ENCODE measurements at regions of chr12 and their contacts with region 1.

Region 1: DNA sequence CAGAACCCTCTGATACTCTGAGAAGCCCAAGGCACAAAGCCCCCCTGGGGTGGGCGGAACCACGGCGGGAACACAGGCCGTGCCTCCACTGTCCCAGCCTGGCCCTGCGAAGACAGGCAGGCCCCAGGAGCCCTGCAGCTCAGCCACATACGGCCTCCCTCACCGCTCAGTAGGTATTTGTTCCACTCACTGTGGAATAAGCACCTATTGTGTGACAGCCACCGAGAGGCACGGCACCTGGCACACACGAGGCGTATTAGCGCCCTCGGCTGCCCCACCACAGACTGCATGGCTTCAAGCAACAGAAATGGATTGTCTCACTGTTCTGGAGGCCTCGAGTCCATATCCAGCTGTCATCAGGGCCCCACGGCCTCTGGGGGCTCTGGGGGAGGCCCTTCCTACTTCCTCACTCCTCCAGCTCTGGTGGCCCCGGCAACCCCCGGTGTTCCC is 66.3 kb downstream of the NCOR2 start:
- DNase-seq: peak in 1 of 2 experiments; percentile 61
- H3K4me3 ChIP-seq: no peak overlapping the region
- H3K27ac ChIP-seq: peak overlapping the region; percentile 73
- H3K4me1 ChIP-seq: peaks cover 7 to 67% (median 46%) of the 10 kb centered on the region in 4 experiments
- H3K27me3 ChIP-seq: no peaks in the 10 kb centered on the region
- CTCF ChIP-seq: no peak
- EP300 ChIP-seq: no peak
- POLR2A ChIP-seq: no peak
- RAD21 ChIP-seq: no peak

Region 2: DNA sequence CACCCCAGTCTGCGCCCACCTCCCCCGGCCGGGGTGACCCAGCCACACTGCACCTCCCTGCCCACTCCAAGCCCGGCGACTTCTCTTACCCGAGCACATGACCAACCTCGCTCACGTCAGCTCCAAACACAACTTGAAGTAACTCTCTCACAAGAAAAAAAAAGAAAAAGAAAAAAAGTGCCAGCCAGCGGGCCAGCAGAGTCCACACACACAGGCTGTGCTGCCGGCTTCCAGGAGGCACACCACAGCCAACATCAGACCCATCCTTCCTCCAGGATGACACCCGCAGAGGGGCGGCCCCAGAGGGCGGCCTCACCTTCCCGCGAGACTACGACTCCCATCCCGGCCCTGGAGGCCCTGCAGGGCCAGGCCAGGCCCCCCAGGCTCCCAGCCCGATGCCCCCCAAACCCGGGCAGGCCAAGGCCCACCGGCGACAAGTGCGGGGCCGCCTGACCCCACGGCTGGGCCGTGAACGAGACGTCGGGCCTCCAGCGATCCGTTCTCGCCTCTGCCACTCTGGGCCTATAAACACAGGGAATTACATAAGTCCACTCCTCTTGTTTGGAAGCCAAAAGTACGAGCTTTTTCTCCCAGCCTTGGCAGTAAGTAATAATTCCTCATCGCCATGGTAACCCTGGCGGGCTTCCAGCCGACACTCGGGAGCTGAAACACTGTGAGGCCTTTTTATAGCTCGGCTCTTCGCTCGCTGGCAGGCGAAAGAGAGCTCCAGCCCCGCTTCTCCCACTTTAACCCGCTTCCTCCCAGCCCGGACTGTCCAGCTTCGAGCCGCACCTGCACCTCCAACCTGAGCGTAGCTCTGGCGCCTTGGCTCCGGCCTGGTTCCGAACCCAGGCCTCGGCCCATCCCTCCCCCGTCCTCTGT is 17.2 kb after region 1 on chr12:
- CTCF ChIA-PET with region 1: interaction called, 8 read pairs
- POLR2A ChIA-PET with region 1: interaction called, 32 read pairs
- DNase-seq: no peak
- H3K4me3 ChIP-seq: no peak overlapping the region
- H3K27ac ChIP-seq: peak overlapping the region; percentile 54
- H3K4me1 ChIP-seq: peaks cover 9 to 29% (median 24%) of the 10 kb centered on the region in 4 experiments
- H3K27me3 ChIP-seq: no peaks in the 10 kb centered on the region
- CTCF ChIP-seq: no peak
- EP300 ChIP-seq: no peak
- POLR2A ChIP-seq: no peak
- RAD21 ChIP-seq: no peak

Measured in H1 (cell line).